Uterus (tissue), 4 donors: ENCODE measurements at regions of chr12 and their contacts with region 1.

Region 1: DNA sequence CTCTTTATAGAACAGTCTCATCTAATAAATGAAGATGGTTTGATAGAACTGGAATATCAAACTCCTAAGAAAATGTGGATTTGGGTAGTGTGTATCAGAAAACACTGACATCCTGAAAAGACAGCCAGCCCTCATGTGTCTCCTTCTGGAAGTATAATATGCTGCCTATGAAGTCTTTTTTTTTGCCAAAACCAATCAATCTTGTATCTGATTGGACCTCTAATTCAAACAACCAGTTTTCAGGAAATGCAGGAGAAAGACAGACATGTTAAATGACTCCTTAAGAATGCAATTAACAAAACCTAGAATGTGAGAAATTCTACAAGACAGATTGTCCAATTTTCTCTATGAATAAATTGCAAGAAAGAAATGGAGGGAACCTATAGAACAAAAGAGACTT is 34.3 kb downstream of the MYO1H start:
- DNase-seq: no peak
- H3K4me3 ChIP-seq: no peak overlapping the region
- H3K27ac ChIP-seq: no peak overlapping the region
- H3K4me1 ChIP-seq: no peaks in the 10 kb centered on the region
- H3K27me3 ChIP-seq: no peaks in the 10 kb centered on the region
- CTCF ChIP-seq: no peak
- POLR2A ChIP-seq: no peak

Region 2: DNA sequence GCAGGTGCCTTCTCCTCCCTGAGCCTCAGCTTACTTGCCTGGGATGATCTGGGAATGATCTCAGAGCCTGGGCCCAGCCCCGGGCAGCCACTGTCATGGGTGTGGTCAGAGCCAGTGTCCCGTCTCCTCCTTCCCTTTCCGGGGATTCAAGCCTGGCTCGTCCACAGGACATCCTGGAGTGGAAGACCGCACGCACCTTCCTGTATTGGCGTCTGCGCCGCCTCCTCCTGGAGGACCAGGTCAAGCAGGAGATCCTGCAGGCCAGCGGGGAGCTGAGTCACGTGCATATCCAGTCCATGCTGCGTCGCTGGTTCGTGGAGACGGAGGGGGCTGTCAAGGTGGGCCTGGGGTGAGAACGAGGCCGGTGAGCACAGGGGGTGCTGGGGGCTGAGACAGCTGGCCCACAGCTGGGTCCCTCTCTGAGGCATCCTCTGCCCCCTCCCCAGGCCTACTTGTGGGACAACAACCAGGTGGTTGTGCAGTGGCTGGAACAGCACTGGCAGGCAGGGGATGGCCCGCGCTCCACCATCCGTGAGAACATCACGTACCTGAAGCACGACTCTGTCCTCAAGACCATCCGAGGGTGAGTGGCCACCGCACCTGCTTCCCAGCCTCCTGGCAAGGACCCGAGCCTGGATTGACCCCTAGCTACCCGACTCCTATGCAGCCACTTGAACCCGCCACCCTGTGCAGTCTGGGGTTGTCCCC is 116.9 kb before region 1 on chr12:
- intact Hi-C with region 1: loop called (anchors 5 kb)
- DNase-seq: no peak
- H3K4me3 ChIP-seq: no peak overlapping the region
- H3K27ac ChIP-seq: peak overlapping the region; percentile 76 to 85
- H3K4me1 ChIP-seq: peaks cover 0 to 10% of the 10 kb centered on the region in 2 donors
- H3K27me3 ChIP-seq: no peaks in the 10 kb centered on the region
- CTCF ChIP-seq: no peak
- POLR2A ChIP-seq: no peak

Region 3: DNA sequence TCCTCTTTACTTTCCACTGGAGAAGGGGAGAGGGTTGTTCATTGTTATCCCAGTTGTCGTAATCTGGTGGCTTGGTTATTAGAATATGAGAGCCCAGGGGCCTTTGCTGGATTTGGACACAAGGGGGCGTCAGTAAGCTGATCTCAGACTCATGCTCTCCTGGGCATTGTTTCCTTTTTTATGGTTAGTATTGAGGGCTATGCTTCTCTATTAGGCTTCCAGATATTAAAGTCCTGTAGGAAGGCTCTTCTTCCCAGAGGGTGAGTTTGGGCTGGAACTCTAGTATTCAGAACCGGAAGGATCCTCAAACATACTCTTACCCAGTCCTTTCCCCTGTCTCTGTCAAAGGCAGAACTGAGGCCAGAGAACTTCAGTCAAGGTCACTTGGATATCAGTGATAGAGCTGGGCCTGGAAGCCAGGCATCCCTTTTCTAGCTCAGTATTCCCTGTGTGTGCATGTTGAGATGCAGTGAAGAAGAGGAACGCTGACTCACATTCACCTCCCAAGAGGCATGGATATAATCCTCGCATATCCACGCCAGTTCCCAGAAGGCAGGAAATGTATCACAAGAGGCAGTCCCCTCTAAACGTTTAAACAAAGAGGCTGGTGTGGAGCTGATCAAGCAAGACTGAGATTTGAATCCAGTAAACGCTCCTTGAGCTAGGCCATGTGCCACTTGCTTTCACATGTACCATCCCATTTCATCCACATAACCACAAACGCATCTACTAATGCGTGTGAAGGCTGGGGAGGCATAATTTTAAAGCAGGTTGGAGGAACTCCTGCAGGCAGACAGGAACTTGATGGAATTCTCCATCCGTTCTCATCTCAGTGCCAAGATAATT is 137.0 kb after region 1 on chr12:
- intact Hi-C with region 1: no loop called
- DNase-seq: peak; percentile 28 to 40
- H3K4me3 ChIP-seq: no peak overlapping the region
- H3K27ac ChIP-seq: peak overlapping the region; percentile 10 to 38
- H3K4me1 ChIP-seq: no peaks in the 10 kb centered on the region
- H3K27me3 ChIP-seq: no peaks in the 10 kb centered on the region
- CTCF ChIP-seq: peak; percentile 49 to 69 (median 52)
- POLR2A ChIP-seq: no peak